ENCODE measurements at regions of chr2 and their contacts with region 1.

Region 1: GRCh38 chr2:85282914-85283313 is 44.9 kb downstream of the TGOLN2 start:
- DNase-seq: no peak
- H3K4me3 ChIP-seq: no peak overlapping the region
- H3K27ac ChIP-seq: no peak overlapping the region
- H3K4me1 ChIP-seq: peaks cover 11% of the 10 kb centered on the region in 2 experiments
- H3K27me3 ChIP-seq: no peaks in the 10 kb centered on the region
- CTCF ChIP-seq: no peak
- EP300 ChIP-seq: no peak
- RAD21 ChIP-seq: no peak

Region 2: DNA sequence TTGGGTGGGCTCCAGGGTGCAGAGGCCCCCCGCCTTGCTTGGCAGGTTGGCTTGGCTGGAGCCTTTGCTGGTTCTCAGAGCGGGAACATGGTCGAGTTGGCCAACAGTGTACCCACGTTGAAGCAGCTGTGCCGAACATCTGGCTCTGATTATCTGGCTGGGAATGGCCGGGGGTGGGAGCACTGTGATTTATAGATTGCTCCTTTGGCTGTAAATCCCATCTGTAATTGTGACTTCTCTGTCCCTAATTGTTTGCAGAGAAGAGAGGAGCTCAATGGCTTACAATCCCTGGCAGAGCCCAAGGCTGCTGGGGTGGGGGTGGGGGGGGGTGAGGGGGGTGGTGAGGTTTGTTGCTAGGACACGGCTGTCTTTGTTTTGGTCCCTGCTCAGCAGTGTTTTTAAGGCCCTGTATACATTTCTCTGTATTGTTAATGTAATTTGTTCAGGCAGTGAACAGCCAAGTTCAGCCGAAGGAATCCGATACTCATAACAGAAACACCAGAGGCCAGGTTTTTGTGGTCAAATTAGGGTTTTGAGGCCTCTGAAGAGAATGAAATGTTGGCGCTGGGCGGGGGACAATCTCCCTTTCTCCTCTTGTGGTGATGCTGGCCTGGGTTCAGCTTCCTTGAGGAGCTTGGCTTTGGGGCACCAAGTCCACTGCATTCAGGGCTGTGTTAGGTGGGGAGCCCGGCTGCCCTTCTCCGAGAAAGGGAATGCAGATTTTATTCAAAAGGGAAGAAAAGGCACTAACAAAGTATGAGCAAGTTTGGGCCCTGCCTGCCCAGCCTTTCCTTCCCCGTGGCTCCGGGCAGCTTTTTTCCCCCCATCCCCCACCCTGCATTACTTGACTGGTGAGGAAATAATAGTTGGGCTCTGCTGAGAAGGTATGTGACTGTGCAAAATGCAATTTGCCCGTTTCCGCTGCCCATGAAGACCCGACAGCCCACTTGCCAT is 67.2 kb before region 1 on chr2:
- CTCF ChIA-PET with region 1: interaction called, 13 read pairs
- POLR2A ChIA-PET with region 1: no interaction called
- DNase-seq: peak; percentile 87
- H3K4me3 ChIP-seq: peak overlapping the region in 1 of 2 experiments; percentile 7; a peak in 1 of 4 replicates
- H3K27ac ChIP-seq: peak overlapping the region; percentile 80 to 90
- H3K4me1 ChIP-seq: peaks cover 36 to 39% of the 10 kb centered on the region in 2 experiments
- H3K27me3 ChIP-seq: no peaks in the 10 kb centered on the region
- CTCF ChIP-seq: no peak
- EP300 ChIP-seq: peak in 1 of 2 experiments; percentile 92; a peak in 2 of 4 replicates
- RAD21 ChIP-seq: peak; percentile 3; the same call in 1 of the 2 replicates

Region 3: DNA sequence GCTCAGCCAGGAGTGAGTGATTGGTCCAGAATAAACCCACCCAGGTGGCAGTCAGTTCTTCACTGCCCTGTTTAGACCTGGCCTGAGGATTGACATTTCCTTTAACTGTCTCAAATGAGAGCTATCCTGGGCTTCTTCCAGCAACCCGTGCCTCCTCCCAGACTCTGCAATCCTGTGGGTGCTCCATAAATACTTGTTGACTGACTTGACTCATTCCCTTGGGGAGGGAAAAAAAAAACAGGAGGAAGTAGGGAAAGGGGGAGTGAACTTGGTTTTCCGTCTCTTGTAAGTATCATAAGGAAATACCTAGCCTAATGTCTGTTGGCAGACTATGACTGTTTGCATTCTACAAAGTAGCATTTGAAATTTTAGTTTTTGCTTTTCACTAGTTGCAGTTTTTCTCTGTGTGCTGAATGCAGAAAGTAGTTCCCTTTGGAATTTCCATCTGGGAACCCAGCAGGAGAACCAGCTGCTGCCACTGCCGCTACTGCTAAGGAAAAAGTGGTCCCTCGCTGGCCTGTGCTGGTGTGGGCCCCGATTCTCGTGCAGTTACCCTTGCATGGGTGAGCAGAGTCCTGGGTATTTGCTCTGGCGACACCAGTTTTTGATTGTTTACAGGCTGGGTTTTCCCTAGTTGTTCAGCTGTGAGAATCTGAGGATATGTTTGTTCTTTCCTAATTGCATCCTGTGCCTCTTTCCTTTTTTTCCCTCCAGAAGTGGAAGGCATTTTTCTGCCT is 34.0 kb before region 1 on chr2:
- CTCF ChIA-PET with region 1: interaction called, 20 read pairs
- POLR2A ChIA-PET with region 1: no interaction called
- DNase-seq: no peak
- H3K4me3 ChIP-seq: no peak overlapping the region
- H3K27ac ChIP-seq: peak overlapping the region; percentile 63 to 64; a peak in 3 of 4 replicates
- H3K4me1 ChIP-seq: peaks cover 35 to 38% of the 10 kb centered on the region in 2 experiments
- H3K27me3 ChIP-seq: no peaks in the 10 kb centered on the region
- CTCF ChIP-seq: no peak
- EP300 ChIP-seq: peak in 1 of 2 experiments; percentile 64; a peak in 1 of 4 replicates
- RAD21 ChIP-seq: no peak

Region 4: GRCh38 chr2:85389116-85389515 is 106.2 kb after region 1 on chr2:
- CTCF ChIA-PET with region 1: no interaction called
- POLR2A ChIA-PET with region 1: no interaction called
- DNase-seq: no peak
- H3K4me3 ChIP-seq: no peak overlapping the region
- H3K27ac ChIP-seq: no peak overlapping the region
- H3K4me1 ChIP-seq: peaks cover 0 to under 1% of the 10 kb centered on the region in 2 experiments; a peak in 1 of 4 replicates
- H3K27me3 ChIP-seq: no peaks in the 10 kb centered on the region
- CTCF ChIP-seq: no peak
- EP300 ChIP-seq: no peak
- RAD21 ChIP-seq: no peak

Measured in SK-N-SH (cell line).